Dendritic cell treated with granulocyte-macrophage colony-stimulating factor and Interleukin-4, amounts not matched to agents 40 ng/mL and 50 ng/mL, for 4 days (primary cell): ENCODE measurements at regions of chr1 and their contacts with region 1.

Region 1: DNA sequence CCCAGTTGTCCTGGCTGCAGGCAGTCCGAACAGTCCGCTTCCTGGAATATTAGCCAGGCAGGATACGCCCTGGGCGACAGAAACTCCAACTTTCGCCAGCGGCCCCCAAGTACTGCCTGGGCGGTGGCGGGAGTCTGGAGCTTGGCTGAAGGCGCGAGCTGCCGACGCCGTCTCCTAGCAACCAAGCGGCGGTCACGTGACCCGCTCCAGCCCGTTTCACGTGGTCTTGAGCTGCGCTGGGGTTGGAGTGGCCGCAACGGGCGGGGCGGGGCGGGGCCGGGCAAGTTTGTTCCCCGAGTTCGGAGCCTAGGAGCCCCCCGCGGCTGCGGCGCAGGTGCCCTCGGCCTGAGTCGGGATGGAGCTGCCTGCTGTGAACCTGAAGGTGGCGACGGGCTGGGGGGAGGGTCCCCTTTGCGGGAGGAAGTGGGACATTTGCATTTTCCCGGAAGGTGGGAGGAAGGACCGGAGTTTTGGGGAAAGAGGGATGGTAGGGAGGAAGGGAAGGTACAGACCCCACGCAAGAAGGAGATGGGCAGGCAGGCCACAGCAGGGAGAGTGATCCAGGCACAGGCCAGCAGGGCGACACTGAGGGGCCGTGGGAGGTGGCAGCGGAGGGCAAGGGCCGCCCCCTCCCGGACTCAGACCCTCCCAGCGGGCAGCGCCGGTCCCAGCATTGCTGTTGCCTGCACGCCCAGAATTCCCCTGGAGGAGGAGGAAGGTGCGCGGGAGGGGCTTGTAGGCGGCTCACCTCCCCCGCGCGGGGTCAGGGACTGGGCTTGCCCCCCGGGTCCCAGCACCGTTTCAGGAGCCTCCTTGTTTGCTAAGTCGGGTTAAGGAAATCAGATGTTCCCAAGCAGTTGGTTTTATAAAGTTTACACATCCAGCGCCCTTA is at the start of gene AGTRAP:
- H3K4me3 Mint-ChIP-seq: peak within 1 kb of the TSS; percentile 100
- H3K27ac Mint-ChIP-seq: peak within 1 kb of the TSS; percentile 94
- H3K4me1 Mint-ChIP-seq: peaks cover 73% of the 10 kb centered on the region
- H3K27me3 Mint-ChIP-seq: no peaks in the 10 kb centered on the region

Region 2: GRCh38 chr1:12019858-12020509 is 283.9 kb after region 1 on chr1:
- intact Hi-C with region 1: loop called (anchors 5 kb)
- H3K4me3 Mint-ChIP-seq: peak overlapping the region; percentile 82
- H3K27ac Mint-ChIP-seq: peak overlapping the region; percentile 87
- H3K4me1 Mint-ChIP-seq: peaks cover 16% of the 10 kb centered on the region
- H3K27me3 Mint-ChIP-seq: no peaks in the 10 kb centered on the region